K562 (cell line): ENCODE measurements at regions of chr5 and their contacts with region 1.

Region 1: DNA sequence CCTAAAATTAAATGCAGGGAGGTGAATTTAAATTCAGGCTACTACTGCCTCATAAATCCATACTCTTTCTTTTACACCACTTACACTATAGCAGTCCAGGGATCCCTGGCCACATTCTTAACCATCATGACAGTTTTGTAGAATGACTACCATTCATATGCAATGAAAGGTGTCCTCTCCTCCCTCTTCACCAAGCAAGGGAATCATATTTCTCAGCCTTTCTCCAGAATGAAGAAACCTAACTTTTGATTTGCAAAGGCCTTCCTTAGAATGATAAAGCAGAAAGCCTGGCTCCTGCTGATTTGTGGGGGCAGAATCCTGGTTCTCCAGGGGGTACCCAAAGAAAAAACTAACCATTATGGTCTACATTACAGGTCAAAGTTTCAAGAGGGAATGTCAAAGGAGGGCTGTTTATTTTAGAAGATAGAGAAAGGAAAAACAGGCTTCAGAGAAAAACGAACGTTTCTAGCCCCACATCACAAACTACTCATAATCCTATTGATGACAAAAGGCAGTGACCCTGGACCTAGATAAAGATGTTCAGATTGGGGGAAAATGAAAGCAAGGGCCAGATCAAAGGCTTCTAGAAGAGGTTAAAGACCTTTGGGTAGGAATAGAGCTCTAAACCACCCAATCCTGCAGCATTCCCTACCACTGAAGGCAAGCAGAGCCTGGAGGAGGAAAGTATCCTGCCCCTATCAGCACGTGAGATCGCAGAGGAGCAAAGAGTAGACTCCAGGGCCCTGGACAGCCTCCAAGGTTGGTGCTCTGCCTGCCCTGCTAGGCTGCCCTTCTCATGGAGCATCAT is 11.5 kb downstream of the WNT8A start:
- DNase-seq: no peak
- ATAC-seq: no peak
- H3K4me3 ChIP-seq: no peak overlapping the region
- H3K27ac ChIP-seq: no peak overlapping the region
- H3K4me1 ChIP-seq: no peaks in the 10 kb centered on the region
- H3K27me3 ChIP-seq: peaks cover 33 to 50% of the 10 kb centered on the region in 2 experiments
- CTCF ChIP-seq: no peak
- EP300 ChIP-seq: no peak
- POLR2A ChIP-seq: no peak
- RAD21 ChIP-seq: no peak

Region 2: DNA sequence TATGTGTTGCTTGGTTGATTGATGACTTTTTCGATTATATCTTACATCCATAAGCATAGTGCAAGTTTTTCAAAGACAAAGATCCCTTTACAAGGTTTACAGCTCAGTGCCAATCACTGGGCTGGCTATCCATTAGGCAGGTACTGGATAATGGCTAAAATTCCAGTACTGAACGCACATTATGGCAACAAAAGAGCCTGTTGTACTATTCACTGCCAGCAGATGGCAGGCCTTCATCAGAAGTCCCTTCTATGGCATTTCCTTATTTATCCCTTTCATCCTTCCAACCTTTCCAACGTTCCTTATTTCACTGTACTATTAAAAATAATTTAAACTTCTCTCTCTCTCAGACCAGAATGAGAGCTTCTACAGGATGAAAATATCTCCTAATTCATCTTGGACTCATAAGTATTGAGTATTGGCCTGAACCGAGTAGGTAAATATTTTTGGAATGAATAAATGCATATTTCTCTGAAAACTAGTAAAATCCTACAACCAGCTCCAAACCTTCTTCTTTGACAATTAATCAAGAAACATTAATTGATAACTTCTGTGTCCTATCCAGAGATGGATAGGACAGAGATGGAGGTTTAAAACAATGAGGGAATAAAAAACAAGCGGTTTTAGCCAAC is 18.1 kb before region 1 on chr5:
- CTCF ChIA-PET with region 1: no interaction called
- POLR2A ChIA-PET with region 1: interaction called, 10 read pairs
- in situ Hi-C with region 1: no loop called
- intact Hi-C with region 1: no loop called
- DNase-seq: peak; percentile 56 to 73 (median 62)
- ATAC-seq: peak; percentile 83
- H3K4me3 ChIP-seq: no peak overlapping the region
- H3K27ac ChIP-seq: no peak overlapping the region
- H3K4me1 ChIP-seq: no peaks in the 10 kb centered on the region; a peak in 1 of 5 replicates
- H3K27me3 ChIP-seq: no peaks in the 10 kb centered on the region; a peak in 1 of 5 replicates
- CTCF ChIP-seq: peak; percentile 79 to 93 (median 80)
- EP300 ChIP-seq: no peak
- POLR2A ChIP-seq: no peak
- RAD21 ChIP-seq: peak; percentile 78 to 93

Region 3: DNA sequence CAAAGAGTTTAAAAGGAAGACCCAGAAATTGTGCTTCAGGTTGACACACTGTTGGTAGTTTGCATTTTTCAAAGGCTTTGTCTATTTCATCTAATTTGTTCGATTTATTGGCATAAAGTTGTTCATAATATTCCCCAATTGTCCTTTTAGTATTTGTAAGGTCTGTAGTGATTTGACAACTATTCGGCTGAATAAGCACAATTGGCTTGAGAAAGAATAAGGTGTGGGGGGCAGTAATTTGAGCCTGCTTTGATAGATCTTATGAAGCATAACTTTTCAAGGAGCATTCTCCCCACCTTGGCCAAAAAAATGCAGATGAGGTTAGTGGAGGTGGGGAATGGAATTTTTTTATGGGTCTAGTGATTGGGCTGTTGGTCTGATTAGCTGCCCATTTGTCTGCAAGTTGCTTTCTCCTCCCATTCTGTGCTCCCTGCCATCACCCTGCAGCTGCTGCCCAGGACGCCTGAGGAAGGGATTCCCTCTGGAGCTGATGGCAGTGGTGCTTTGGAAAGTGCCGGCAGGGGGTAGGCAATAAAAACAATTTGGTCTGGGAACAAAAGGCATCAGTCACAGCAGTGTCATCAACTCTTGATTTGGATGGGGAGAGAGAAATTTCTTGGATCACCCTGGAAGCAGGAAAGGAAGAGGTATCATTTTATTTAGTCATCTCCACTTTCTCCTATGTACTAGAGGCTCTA is 15.1 kb after region 1 on chr5:
- CTCF ChIA-PET with region 1: no interaction called
- POLR2A ChIA-PET with region 1: interaction called, 3 read pairs
- in situ Hi-C with region 1: no loop called
- intact Hi-C with region 1: loop called (anchors 1 kb)
- DNase-seq: no peak
- ATAC-seq: no peak
- H3K4me3 ChIP-seq: no peak overlapping the region
- H3K27ac ChIP-seq: no peak overlapping the region
- H3K4me1 ChIP-seq: no peaks in the 10 kb centered on the region; a peak in 1 of 5 replicates
- H3K27me3 ChIP-seq: peaks cover 15 to 22% of the 10 kb centered on the region in 2 experiments; a peak in 4 of 5 replicates
- CTCF ChIP-seq: no peak
- EP300 ChIP-seq: no peak
- POLR2A ChIP-seq: no peak
- RAD21 ChIP-seq: no peak